ENCODE measurements at regions of chr17 and their contacts with region 1.

Region 1: DNA sequence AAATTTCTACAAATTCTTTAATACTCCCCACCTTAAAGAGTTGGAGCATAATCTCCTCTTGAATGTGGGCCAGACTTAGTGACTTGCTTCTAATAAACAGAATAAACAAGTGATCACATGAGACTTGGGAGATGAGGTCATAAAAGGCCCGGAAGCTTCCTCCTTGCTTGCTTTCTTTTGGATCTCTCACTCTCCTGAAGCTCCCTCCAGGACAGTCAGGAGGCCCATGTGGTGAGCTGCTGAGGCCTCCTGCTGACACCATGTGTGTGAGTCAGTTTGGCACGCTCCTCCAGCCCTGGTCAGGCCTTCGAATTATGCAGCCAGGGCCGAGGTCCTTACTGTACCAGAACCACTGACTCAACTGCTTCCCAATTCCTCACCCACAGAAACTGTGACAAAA is 53.2 kb downstream of the NDEL1 start:
- DNase-seq: no peak
- H3K4me3 ChIP-seq: no peak overlapping the region
- H3K4me3 Mint-ChIP-seq: no peak overlapping the region
- H3K27ac Mint-ChIP-seq: no peak overlapping the region
- H3K4me1 ChIP-seq: no peaks in the 10 kb centered on the region
- H3K4me1 Mint-ChIP-seq: no peaks in the 10 kb centered on the region
- H3K27me3 ChIP-seq: no peaks in the 10 kb centered on the region
- H3K27me3 Mint-ChIP-seq: no peaks in the 10 kb centered on the region
- CTCF ChIP-seq: no peak

Region 2: GRCh38 chr17:8409966-8410864 is 78.7 kb before region 1 on chr17:
- CTCF ChIA-PET with region 1: no interaction called
- POLR2A ChIA-PET with region 1: no interaction called
- intact Hi-C with region 1: no loop called
- DNase-seq: peak; percentile 77
- H3K4me3 ChIP-seq: no peak overlapping the region
- H3K4me3 Mint-ChIP-seq: no peak overlapping the region
- H3K27ac Mint-ChIP-seq: no peak overlapping the region
- H3K4me1 ChIP-seq: no peaks in the 10 kb centered on the region
- H3K4me1 Mint-ChIP-seq: no peaks in the 10 kb centered on the region
- H3K27me3 ChIP-seq: no peaks in the 10 kb centered on the region
- H3K27me3 Mint-ChIP-seq: no peaks in the 10 kb centered on the region
- CTCF ChIP-seq: peak; percentile 58

Region 3: DNA sequence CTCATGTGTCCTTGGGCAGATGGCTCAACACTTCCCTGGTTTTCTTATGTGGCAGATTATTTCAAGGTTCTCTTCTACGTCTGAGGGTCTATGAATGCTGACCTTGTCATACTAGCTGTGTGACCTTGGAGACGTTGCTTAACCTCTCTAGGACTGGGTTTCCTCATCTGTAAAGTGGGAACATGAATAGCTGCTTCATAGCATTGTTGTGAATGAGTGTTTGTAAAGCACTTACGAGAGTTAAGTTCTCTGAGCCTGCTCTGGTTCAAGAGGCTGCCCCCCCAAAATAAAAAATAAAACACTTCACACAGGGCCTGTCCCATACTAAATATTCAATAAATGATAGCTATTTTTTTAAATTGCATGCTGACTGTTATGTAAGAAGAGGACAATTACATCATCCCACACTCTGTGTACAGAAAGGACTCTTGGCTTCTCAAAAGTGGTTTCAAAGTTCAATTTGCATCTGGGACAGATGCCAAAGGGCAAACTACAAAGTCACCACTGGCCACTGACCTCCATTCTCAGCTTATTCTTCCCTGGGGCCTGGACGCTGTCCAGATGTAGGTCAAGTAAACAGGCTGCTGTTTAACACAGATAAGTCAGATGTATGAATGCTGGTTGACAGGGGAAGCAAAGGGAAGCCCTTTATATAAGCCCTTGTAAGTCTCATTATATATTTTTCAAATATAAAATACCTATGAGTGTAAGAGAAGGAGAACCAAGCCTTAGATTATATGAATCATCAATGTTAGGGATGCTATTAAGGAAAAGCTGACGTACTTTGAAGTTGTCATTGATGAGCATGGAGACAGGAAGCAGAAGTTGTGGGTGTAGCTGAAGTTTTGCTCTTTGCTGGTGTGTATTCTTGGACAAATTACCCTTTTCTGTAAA is 68.6 kb before region 1 on chr17:
- CTCF ChIA-PET with region 1: no interaction called
- POLR2A ChIA-PET with region 1: no interaction called
- intact Hi-C with region 1: no loop called
- DNase-seq: peak in 1 of 2 experiments; percentile 19
- H3K4me3 ChIP-seq: no peak overlapping the region
- H3K4me3 Mint-ChIP-seq: no peak overlapping the region
- H3K27ac Mint-ChIP-seq: no peak overlapping the region
- H3K4me1 ChIP-seq: no peaks in the 10 kb centered on the region
- H3K4me1 Mint-ChIP-seq: no peaks in the 10 kb centered on the region
- H3K27me3 ChIP-seq: no peaks in the 10 kb centered on the region
- H3K27me3 Mint-ChIP-seq: peaks cover 6% of the 10 kb centered on the region
- CTCF ChIP-seq: no peak

Region 4: GRCh38 chr17:8476741-8477140 is 12.2 kb before region 1 on chr17:
- CTCF ChIA-PET with region 1: no interaction called
- POLR2A ChIA-PET with region 1: interaction called, 18 read pairs
- intact Hi-C with region 1: no loop called
- DNase-seq: no peak
- H3K4me3 ChIP-seq: no peak overlapping the region
- H3K4me3 Mint-ChIP-seq: no peak overlapping the region
- H3K27ac Mint-ChIP-seq: no peak overlapping the region
- H3K4me1 ChIP-seq: no peaks in the 10 kb centered on the region
- H3K4me1 Mint-ChIP-seq: no peaks in the 10 kb centered on the region
- H3K27me3 ChIP-seq: no peaks in the 10 kb centered on the region
- H3K27me3 Mint-ChIP-seq: no peaks in the 10 kb centered on the region
- CTCF ChIP-seq: no peak

Region 5: GRCh38 chr17:8585911-8586310 is 97.0 kb after region 1 on chr17:
- CTCF ChIA-PET with region 1: no interaction called
- POLR2A ChIA-PET with region 1: no interaction called
- intact Hi-C with region 1: no loop called
- DNase-seq: no peak
- H3K4me3 ChIP-seq: no peak overlapping the region
- H3K4me3 Mint-ChIP-seq: no peak overlapping the region
- H3K27ac Mint-ChIP-seq: no peak overlapping the region
- H3K4me1 ChIP-seq: peaks cover 6% of the 10 kb centered on the region; the same call in 1 of the 2 replicates
- H3K4me1 Mint-ChIP-seq: peaks cover 11% of the 10 kb centered on the region
- H3K27me3 ChIP-seq: no peaks in the 10 kb centered on the region
- H3K27me3 Mint-ChIP-seq: no peaks in the 10 kb centered on the region
- CTCF ChIP-seq: no peak